MCF 10A (cell line): ENCODE measurements at regions of chr19 and their contacts with region 1.

Region 1: GRCh38 chr19:49580264-49581006 is at the start of gene NOSIP:
- DNase-seq: peak; percentile 98
- H3K4me3 Mint-ChIP-seq: peak within 1 kb of the TSS; percentile 92
- H3K27ac Mint-ChIP-seq: peak within 1 kb of the TSS; percentile 96
- H3K4me1 Mint-ChIP-seq: peaks cover 22% of the 10 kb centered on the region
- H3K27me3 Mint-ChIP-seq: no peaks in the 10 kb centered on the region
- CTCF ChIP-seq: no peak
- total RNA-seq, gene NOSIP: 54.4 and 57.9 TPM in 2 replicates

Region 2: GRCh38 chr19:49430678-49431329 is 149.6 kb before region 1 on chr19:
- CTCF ChIA-PET with region 1: no interaction called
- POLR2A ChIA-PET with region 1: no interaction called
- intact Hi-C with region 1: no loop called
- DNase-seq: peak; percentile 38
- H3K4me3 Mint-ChIP-seq: no peak overlapping the region
- H3K27ac Mint-ChIP-seq: no peak overlapping the region
- H3K4me1 Mint-ChIP-seq: no peaks in the 10 kb centered on the region
- H3K27me3 Mint-ChIP-seq: peaks cover 43% of the 10 kb centered on the region
- CTCF ChIP-seq: peak; percentile 15

Region 3: DNA sequence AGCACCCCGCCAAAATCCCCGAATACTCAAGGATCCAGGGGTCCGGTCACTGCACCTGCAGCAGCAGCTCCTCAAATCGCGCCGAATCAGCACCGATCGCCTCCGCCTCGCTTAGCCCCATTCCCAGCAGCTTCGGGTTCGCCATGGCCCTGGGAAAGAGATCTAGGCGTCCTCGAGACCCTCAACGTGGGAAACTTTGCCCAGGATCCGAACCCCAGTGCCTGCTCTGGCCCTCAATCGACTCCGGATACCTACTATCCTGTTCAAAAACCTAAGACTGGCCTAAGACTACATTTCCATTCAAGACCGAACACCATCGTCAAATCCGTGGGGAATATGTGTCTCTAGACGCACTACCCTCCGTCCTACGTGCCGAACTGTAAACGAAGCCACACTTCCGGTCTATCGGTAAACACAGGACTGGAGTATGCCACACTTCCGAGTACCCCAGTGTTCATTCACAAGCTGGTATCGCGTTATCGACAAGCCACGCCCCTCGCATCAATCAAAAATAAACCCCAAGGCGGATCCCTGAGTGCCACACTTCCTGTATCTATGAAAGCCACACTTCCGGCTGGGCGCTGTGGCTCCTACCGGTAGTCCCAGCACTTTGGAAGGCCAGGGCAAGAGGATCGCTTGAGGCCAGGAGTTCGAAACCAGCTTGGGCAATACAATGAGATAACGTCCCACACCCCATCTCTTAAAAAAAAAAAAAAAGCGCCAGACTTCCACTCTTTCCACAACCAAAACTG is 128.8 kb before region 1 on chr19 and contains the start of gene PIH1D1:
- CTCF ChIA-PET with region 1: no interaction called
- POLR2A ChIA-PET with region 1: interaction called, 24 read pairs
- intact Hi-C with region 1: no loop called
- DNase-seq: peak; percentile 100
- H3K4me3 Mint-ChIP-seq: peak within 1 kb of the TSS; percentile 96
- H3K27ac Mint-ChIP-seq: peak within 1 kb of the TSS; percentile 100
- H3K4me1 Mint-ChIP-seq: peaks cover 16% of the 10 kb centered on the region
- H3K27me3 Mint-ChIP-seq: no peaks in the 10 kb centered on the region
- CTCF ChIP-seq: no peak
- total RNA-seq, gene PIH1D1: 86.3 and 116 TPM in 2 replicates

Region 4: GRCh38 chr19:49497047-49497788 is 83.2 kb before region 1 on chr19:
- CTCF ChIA-PET with region 1: no interaction called
- POLR2A ChIA-PET with region 1: interaction called, 38 read pairs
- intact Hi-C with region 1: no loop called
- DNase-seq: peak; percentile 68
- H3K4me3 Mint-ChIP-seq: peak overlapping the region; percentile 91
- H3K27ac Mint-ChIP-seq: peak overlapping the region; percentile 97
- H3K4me1 Mint-ChIP-seq: peaks cover 6% of the 10 kb centered on the region
- H3K27me3 Mint-ChIP-seq: no peaks in the 10 kb centered on the region
- CTCF ChIP-seq: no peak

Region 5: DNA sequence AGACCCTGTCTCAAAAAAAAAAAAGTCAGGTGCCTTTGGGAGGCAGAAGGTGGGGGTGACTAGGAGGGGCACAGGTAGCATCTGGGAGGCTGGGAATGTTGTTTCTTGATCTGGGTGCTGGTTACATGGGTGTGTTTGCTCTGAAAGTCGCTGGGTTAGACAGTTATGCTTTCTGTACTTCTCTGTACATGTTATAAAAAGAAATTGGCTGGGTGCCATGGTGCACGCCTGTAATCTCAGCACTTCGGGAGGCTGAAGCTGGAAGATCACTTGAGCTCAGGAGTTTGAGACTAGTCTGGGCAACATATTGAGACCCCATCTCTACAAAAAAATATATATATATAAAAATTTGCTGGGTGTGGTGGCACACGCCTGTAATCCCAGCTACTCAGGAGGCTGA is 15.2 kb before region 1 on chr19:
- CTCF ChIA-PET with region 1: interaction called, 40 read pairs
- POLR2A ChIA-PET with region 1: interaction called, 35 read pairs
- intact Hi-C with region 1: no loop called
- DNase-seq: no peak
- H3K4me3 Mint-ChIP-seq: no peak overlapping the region
- H3K27ac Mint-ChIP-seq: no peak overlapping the region
- H3K4me1 Mint-ChIP-seq: peaks cover 14% of the 10 kb centered on the region
- H3K27me3 Mint-ChIP-seq: no peaks in the 10 kb centered on the region
- CTCF ChIP-seq: no peak

Region 6: GRCh38 chr19:49665351-49666119 is 85.1 kb after region 1 on chr19 and contains the starts of genes BCL2L12 and IRF3:
- CTCF ChIA-PET with region 1: interaction called, 3 read pairs
- POLR2A ChIA-PET with region 1: interaction called, 23 read pairs
- intact Hi-C with region 1: no loop called
- DNase-seq: peak; percentile 98
- H3K4me3 Mint-ChIP-seq: peak within 1 kb of the TSS; percentile 91
- H3K27ac Mint-ChIP-seq: peak within 1 kb of the TSS; percentile 91
- H3K4me1 Mint-ChIP-seq: peaks cover 17% of the 10 kb centered on the region
- H3K27me3 Mint-ChIP-seq: no peaks in the 10 kb centered on the region
- CTCF ChIP-seq: no peak
- total RNA-seq, gene BCL2L12: 29.4 and 36.0 TPM in 2 replicates
- total RNA-seq, gene IRF3: 65.6 and 82.2 TPM in 2 replicates

Region 7: DNA sequence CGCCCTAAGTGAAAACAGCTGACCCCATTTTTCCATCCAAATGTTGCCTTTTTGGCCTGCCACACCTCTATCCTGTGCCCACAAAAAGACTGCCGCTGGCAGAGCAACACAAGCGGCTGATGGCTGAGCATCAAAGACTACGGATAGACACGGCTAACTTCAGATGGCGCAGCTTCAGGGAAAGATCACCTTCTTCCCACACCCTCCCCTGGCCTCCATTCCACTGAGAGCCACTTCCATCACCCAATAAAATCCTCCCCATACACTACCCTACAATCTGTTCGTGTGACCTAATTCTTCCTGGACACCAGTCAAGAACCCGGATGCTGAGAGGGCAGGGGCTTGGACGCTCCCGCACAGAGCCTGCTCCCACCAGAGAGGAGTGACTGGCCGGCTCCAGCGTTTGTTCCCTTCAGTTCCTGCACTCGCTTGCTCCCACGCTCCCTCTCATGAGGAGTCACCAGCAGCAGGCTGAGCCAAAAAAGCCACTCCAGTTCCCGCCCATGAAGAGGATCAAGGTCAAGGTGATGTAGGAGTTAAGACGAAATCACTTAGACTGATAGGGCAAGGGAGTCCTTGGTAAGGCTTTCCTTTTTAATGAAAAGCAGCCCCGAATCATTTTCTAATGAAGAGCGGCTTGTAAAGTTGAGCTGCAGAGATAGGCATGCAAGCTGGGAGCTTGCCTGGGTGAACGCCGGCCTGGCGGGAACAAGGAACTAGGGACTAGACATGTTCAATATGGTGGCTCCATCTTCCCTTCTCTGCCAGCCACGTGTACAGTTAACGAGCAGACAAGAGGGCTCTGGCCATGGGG is 147.0 kb after region 1 on chr19:
- CTCF ChIA-PET with region 1: no interaction called
- POLR2A ChIA-PET with region 1: no interaction called
- intact Hi-C with region 1: no loop called
- DNase-seq: no peak
- H3K4me3 Mint-ChIP-seq: no peak overlapping the region
- H3K27ac Mint-ChIP-seq: no peak overlapping the region
- H3K4me1 Mint-ChIP-seq: no peaks in the 10 kb centered on the region
- H3K27me3 Mint-ChIP-seq: no peaks in the 10 kb centered on the region
- CTCF ChIP-seq: no peak

Region 8: DNA sequence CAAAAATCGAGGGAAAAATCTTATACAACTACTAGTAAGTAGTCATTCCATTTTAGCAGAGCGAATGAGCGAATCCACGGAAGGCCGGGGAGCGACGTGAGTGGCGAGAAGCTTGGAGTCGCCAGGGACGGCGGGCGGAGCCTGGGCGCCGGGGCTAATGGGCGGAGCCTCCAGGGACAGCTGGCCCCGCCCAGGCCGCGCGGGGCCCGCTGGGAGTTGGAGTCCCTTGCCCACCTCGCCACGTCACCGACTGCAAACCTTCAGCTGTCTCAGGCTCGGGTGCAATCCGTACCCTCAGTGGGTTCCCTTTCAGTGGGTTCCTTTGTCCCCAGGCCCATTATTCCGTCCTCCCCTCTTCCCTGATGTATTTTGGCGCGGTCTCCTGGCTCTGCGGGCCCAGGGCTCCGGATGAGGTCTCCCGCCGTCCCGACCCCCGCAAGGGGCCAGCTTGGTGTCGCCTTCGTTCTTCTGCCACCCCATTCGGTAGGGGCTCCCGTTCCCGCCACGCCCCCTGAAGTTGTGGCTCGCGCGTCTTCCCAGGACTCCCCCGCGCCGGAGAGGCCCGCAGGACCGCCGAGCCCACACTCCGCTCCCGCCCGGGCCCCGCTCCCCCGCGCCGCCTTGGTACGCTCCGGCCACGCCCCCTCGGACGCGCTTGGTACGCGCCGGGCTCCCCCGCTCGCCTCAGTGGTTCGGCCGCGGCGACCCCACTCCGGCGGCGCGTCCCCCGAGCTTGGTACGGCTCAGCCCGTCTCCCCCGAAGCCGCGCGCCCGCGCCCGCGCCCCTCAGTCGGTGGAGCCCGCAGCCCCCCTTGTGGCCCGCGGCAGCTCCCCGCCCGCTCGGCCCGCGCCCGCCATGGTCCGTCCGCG is 270.3 kb after region 1 on chr19 and contains the start of gene PTOV1:
- CTCF ChIA-PET with region 1: no interaction called
- POLR2A ChIA-PET with region 1: interaction called, 12 read pairs
- intact Hi-C with region 1: no loop called
- DNase-seq: peak; percentile 93
- H3K4me3 Mint-ChIP-seq: peak within 1 kb of the TSS; percentile 84
- H3K27ac Mint-ChIP-seq: peak within 1 kb of the TSS; percentile 89
- H3K4me1 Mint-ChIP-seq: peaks cover 32% of the 10 kb centered on the region
- H3K27me3 Mint-ChIP-seq: no peaks in the 10 kb centered on the region
- CTCF ChIP-seq: no peak
- total RNA-seq, gene PTOV1: 68.5 and 78.8 TPM in 2 replicates